Naive thymus-derived CD4-positive, alpha-beta T cell (primary cell): ENCODE measurements at regions of chr19 and their contacts with region 1.

Region 1: GRCh38 chr19:53103198-53103944 is at the start of gene ZNF160:
- DNase-seq: peak; percentile 95 to 99 (median 97)
- ATAC-seq: peak; percentile 99
- H3K4me3 ChIP-seq: peak within 1 kb of the TSS; percentile 99
- H3K4me3 Mint-ChIP-seq: peak within 1 kb of the TSS; percentile 85 to 97 (median 88)
- H3K27ac ChIP-seq: peak within 1 kb of the TSS; percentile 89
- H3K27ac Mint-ChIP-seq: peak within 1 kb of the TSS; percentile 79 to 98 (median 94)
- H3K4me1 ChIP-seq: peaks cover 13 to 15% of the 10 kb centered on the region in 2 donors
- H3K4me1 Mint-ChIP-seq: peaks cover 22 to 37% (median 34%) of the 10 kb centered on the region in 7 donors
- H3K27me3 ChIP-seq: no peaks in the 10 kb centered on the region
- H3K27me3 Mint-ChIP-seq: no peaks in the 10 kb centered on the region
- total RNA-seq, gene ZNF160: 39.1 to 75.3 (median 52.9) TPM

Region 2: DNA sequence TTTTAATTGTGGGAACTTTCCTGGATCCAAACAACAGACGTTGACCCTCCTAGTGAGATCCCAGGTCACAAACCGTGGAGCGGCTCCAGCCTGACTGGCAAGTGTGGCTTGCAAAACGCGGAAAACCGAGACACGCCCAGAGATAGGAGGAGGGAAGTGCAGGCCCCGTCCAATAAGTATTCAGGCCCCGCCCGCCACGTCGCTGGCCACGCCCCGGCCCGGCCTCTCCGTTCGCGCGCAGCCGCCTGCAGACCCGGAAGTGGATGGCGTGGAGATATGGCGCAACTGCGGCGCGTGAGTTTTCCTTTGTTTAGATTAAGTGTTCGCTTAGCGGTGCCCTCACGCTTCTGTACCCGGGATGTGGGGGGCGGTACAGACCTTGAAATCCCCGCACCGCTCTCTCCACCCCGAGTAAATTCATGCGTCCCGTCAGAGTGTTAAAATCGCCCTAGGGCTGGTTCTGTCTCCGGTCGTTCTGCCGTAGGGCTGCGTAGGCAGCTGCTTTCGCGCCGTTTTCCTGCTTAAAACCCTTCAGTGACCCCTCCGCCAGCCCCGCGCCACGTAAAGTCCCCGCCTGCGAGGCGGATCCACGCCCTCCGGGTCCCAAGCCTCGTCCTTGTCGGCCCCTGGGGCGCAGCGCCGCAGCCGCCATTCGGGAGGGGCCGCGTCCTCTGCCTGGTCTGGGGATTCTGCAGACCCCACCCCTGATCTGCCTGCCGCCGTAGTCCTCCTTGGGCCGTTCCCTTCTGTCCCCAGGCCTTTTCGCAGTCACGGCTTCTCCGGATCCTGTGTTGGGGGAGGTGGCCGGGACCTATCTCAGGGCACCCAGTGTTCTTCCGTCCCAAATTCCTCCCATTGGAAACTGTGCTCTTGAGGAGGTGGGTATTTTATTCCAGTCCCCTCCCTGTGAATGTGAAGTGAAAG is 833.8 kb before region 1 on chr19 and contains the start of gene ZNF766:
- CTCF ChIA-PET with region 1: no interaction called
- POLR2A ChIA-PET with region 1: no interaction called
- intact Hi-C with region 1: loop called in 1 of 2 experiments (anchors 1 kb)
- DNase-seq: peak; percentile 94 to 97 (median 96)
- ATAC-seq: peak; percentile 100
- H3K4me3 ChIP-seq: peak within 1 kb of the TSS; percentile 94
- H3K4me3 Mint-ChIP-seq: peak within 1 kb of the TSS; percentile 94 to 100 (median 96)
- H3K27ac ChIP-seq: peak within 1 kb of the TSS; percentile 93
- H3K27ac Mint-ChIP-seq: peak within 1 kb of the TSS; percentile 87 to 97 (median 95)
- H3K4me1 ChIP-seq: peaks cover 15 to 16% of the 10 kb centered on the region in 2 donors
- H3K4me1 Mint-ChIP-seq: peaks cover 20 to 53% (median 45%) of the 10 kb centered on the region in 7 donors
- H3K27me3 ChIP-seq: no peaks in the 10 kb centered on the region
- H3K27me3 Mint-ChIP-seq: no peaks in the 10 kb centered on the region
- total RNA-seq, gene ZNF766: 24.7 to 59.6 (median 41.4) TPM

Region 3: GRCh38 chr19:52809801-52810200 is 293.6 kb before region 1 on chr19:
- CTCF ChIA-PET with region 1: no interaction called
- POLR2A ChIA-PET with region 1: no interaction called
- intact Hi-C with region 1: no loop called
- DNase-seq: no peak
- ATAC-seq: no peak
- H3K4me3 ChIP-seq: no peak overlapping the region
- H3K4me3 Mint-ChIP-seq: no peak overlapping the region
- H3K27ac ChIP-seq: no peak overlapping the region
- H3K27ac Mint-ChIP-seq: no peak overlapping the region
- H3K4me1 ChIP-seq: no peaks in the 10 kb centered on the region
- H3K4me1 Mint-ChIP-seq: no peaks in the 10 kb centered on the region
- H3K27me3 ChIP-seq: no peaks in the 10 kb centered on the region
- H3K27me3 Mint-ChIP-seq: no peaks in the 10 kb centered on the region

Region 4: DNA sequence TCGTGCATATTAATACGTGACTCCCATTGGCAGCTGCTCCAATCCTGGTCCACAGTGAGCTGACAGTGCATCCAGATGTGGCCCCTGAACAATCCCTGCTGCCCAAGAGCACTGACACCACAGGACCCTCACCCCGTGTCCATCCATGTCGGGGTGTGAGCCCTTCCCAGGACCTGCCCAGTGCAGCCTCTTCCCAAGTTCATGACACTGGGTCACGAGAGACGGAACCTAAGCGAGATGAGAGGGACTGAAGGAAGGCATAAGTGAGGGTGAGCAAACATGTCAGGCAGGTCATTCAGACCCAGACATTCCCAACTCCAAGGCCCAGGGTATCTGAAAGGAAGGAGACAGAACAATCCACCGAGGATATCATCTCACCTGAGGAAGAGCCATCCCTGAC is 249.5 kb before region 1 on chr19:
- CTCF ChIA-PET with region 1: no interaction called
- POLR2A ChIA-PET with region 1: no interaction called
- intact Hi-C with region 1: loop called in 1 of 2 experiments (anchors 2 kb)
- DNase-seq: no peak
- ATAC-seq: no peak
- H3K4me3 ChIP-seq: no peak overlapping the region
- H3K4me3 Mint-ChIP-seq: peak overlapping the region in 1 of 10 donors; percentile 53
- H3K27ac ChIP-seq: no peak overlapping the region
- H3K27ac Mint-ChIP-seq: no peak overlapping the region
- H3K4me1 ChIP-seq: no peaks in the 10 kb centered on the region
- H3K4me1 Mint-ChIP-seq: peaks cover 15 to 39% (median 32%) of the 10 kb centered on the region in 7 donors
- H3K27me3 ChIP-seq: no peaks in the 10 kb centered on the region
- H3K27me3 Mint-ChIP-seq: no peaks in the 10 kb centered on the region

Region 5: GRCh38 chr19:53132141-53132991 is 29.0 kb after region 1 on chr19 and contains the start of gene ZNF415:
- CTCF ChIA-PET with region 1: no interaction called
- POLR2A ChIA-PET with region 1: no interaction called
- intact Hi-C with region 1: loop called in 1 of 2 experiments (anchors 2 kb)
- DNase-seq: peak in 7 of 9 donors; percentile 18 to 60 (median 33)
- ATAC-seq: no peak
- H3K4me3 ChIP-seq: peak within 1 kb of the TSS; percentile 9
- H3K4me3 Mint-ChIP-seq: peak within 1 kb of the TSS; percentile 55 to 85 (median 72)
- H3K27ac ChIP-seq: peak within 1 kb of the TSS; percentile 53
- H3K27ac Mint-ChIP-seq: peak within 1 kb of the TSS in 3 of 9 donors; percentile 55 to 84 (median 64)
- H3K4me1 ChIP-seq: no peaks in the 10 kb centered on the region
- H3K4me1 Mint-ChIP-seq: peaks cover 4 to 14% (median 10%) of the 10 kb centered on the region in 7 donors
- H3K27me3 ChIP-seq: no peaks in the 10 kb centered on the region
- H3K27me3 Mint-ChIP-seq: peaks cover 0 to 19% (median 9%) of the 10 kb centered on the region in 5 donors
- total RNA-seq, gene ZNF415: 0.58 to 2.1 (median 0.98) TPM

Region 6: DNA sequence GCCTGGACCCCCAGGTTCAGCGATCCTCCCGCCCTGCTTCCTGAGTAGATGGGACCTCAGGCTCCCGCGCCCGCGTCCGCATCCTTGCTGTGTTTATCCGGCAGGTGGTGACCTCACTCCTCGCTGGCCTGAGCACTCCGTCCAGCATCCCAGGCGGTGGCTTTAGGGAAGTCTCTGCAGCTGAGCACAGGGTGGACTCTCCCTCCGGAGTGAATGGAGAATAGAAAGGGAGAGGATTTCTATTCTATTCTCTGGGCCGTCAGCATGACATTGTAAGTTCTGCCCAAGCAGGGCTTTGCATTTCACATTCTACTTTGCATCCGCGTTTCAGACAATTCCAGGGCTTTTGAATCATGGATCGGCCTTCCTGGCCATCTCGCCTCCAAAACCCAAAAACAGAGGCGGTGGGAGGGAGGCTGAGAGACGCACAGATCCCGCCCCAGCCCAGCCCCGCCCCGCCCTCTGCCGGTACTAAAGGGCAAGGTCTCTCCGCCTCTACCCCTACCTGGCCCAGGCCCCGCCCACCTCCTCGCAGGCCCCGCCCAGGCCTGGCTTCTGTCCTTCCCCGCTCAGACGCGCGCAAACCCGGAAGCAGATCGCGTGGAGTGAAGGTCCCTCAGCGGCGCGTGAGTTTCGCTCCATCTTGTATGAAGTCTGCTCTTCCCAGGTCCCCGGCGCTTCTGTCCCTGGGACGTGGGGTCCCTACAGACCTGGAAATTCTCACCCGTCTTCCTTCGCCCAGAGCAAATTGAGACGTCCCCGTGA is 261.9 kb after region 1 on chr19 and contains the start of gene ZNF525:
- CTCF ChIA-PET with region 1: no interaction called
- POLR2A ChIA-PET with region 1: interaction called, 4 read pairs
- intact Hi-C with region 1: loop called in 1 of 2 experiments (anchors 5 kb)
- DNase-seq: peak; percentile 94 to 97 (median 96)
- ATAC-seq: peak; percentile 100
- H3K4me3 ChIP-seq: peak within 1 kb of the TSS; percentile 96
- H3K4me3 Mint-ChIP-seq: peak within 1 kb of the TSS; percentile 94 to 98 (median 96)
- H3K27ac ChIP-seq: peak within 1 kb of the TSS; percentile 80
- H3K27ac Mint-ChIP-seq: peak within 1 kb of the TSS; percentile 91 to 98 (median 94)
- H3K4me1 ChIP-seq: no peaks in the 10 kb centered on the region
- H3K4me1 Mint-ChIP-seq: peaks cover 12 to 35% (median 31%) of the 10 kb centered on the region in 7 donors
- H3K27me3 ChIP-seq: no peaks in the 10 kb centered on the region
- H3K27me3 Mint-ChIP-seq: no peaks in the 10 kb centered on the region
- total RNA-seq, gene ZNF525: 11.5 to 33.7 (median 24.2) TPM

Region 7: GRCh38 chr19:53553884-53554791 is 450.8 kb after region 1 on chr19:
- CTCF ChIA-PET with region 1: no interaction called
- POLR2A ChIA-PET with region 1: no interaction called
- intact Hi-C with region 1: loop called in 1 of 2 experiments (anchors 1 kb)
- DNase-seq: peak; percentile 90 to 97 (median 95)
- ATAC-seq: peak; percentile 88
- H3K4me3 ChIP-seq: peak overlapping the region; percentile 67
- H3K4me3 Mint-ChIP-seq: peak overlapping the region; percentile 91 to 99 (median 96)
- H3K27ac ChIP-seq: peak overlapping the region; percentile 97
- H3K27ac Mint-ChIP-seq: peak overlapping the region; percentile 96 to 100 (median 100)
- H3K4me1 ChIP-seq: peaks cover 4 to 6% of the 10 kb centered on the region in 2 donors
- H3K4me1 Mint-ChIP-seq: peaks cover 10 to 46% (median 29%) of the 10 kb centered on the region in 7 donors
- H3K27me3 ChIP-seq: no peaks in the 10 kb centered on the region
- H3K27me3 Mint-ChIP-seq: no peaks in the 10 kb centered on the region